AG04450 (cell line): ENCODE measurements at regions of chr7 and their contacts with region 1.

Region 1: GRCh38 chr7:142478479-142479072 is 220.7 kb upstream of the PRSS58 start:
- DNase-seq: no peak
- H3K4me3 ChIP-seq: no peak overlapping the region
- H3K27ac ChIP-seq: no peak overlapping the region
- H3K27me3 ChIP-seq: no peaks in the 10 kb centered on the region
- CTCF ChIP-seq: peak; percentile 61

Region 2: DNA sequence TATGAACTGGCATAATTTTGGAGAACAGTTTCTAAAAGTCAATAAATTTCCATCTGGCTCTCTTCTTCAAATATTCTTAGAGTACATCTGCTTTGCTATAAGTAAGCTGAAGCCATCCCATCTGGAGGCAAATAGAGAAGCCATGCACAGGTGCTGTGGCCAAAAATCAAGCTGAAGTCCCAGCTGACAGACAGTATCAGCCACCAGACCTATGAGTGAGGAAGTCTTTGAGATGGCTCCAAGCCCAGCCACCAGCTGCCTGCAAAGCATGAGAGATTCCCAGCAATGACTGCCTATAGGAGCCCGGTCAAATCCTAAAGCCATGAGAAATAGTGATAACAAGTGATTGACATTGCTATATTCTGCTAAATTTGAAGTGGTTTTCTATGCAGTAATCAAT is 199.0 kb before region 1 on chr7:
- CTCF ChIA-PET with region 1: no interaction called
- POLR2A ChIA-PET with region 1: no interaction called
- DNase-seq: no peak
- H3K4me3 ChIP-seq: no peak overlapping the region
- H3K27ac ChIP-seq: no peak overlapping the region
- H3K27me3 ChIP-seq: no peaks in the 10 kb centered on the region
- CTCF ChIP-seq: no peak

Region 3: GRCh38 chr7:142357953-142358520 is 120.5 kb before region 1 on chr7:
- CTCF ChIA-PET with region 1: interaction called, 19 read pairs
- POLR2A ChIA-PET with region 1: no interaction called
- DNase-seq: peak; percentile 54
- H3K4me3 ChIP-seq: no peak overlapping the region
- H3K27ac ChIP-seq: no peak overlapping the region
- H3K27me3 ChIP-seq: no peaks in the 10 kb centered on the region
- CTCF ChIP-seq: peak; percentile 83

Region 4: GRCh38 chr7:142412551-142413193 is 65.9 kb before region 1 on chr7:
- CTCF ChIA-PET with region 1: interaction called, 25 read pairs
- POLR2A ChIA-PET with region 1: no interaction called
- DNase-seq: no peak
- H3K4me3 ChIP-seq: no peak overlapping the region
- H3K27ac ChIP-seq: no peak overlapping the region
- H3K27me3 ChIP-seq: no peaks in the 10 kb centered on the region
- CTCF ChIP-seq: peak; percentile 73

Region 5: DNA sequence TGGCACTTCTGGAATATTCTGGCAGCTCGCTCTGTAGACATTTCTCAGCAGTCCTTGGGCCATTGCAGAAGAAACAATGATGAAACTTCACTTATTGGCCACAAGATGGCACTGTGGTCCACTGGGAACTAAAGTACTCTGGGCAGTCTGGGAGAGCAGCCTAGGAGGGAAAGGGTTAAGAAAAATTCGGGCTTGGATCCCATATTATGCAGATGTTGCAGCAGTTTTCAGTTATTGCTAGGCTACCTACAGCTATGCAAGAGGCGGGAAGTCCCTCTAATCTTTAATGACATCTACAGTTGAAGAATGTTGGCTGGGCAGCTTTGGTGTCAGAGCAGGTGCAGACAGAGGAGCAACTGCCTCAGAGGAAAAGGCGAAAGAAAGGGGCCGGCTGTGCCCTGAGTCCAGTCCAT is 19.0 kb before region 1 on chr7:
- CTCF ChIA-PET with region 1: interaction called, 328 read pairs
- POLR2A ChIA-PET with region 1: no interaction called
- DNase-seq: peak; percentile 59
- H3K4me3 ChIP-seq: no peak overlapping the region
- H3K27ac ChIP-seq: no peak overlapping the region
- H3K27me3 ChIP-seq: no peaks in the 10 kb centered on the region
- CTCF ChIP-seq: peak; percentile 74

Region 6: GRCh38 chr7:142516038-142516501 is 37.5 kb after region 1 on chr7:
- CTCF ChIA-PET with region 1: interaction called, 35 read pairs
- POLR2A ChIA-PET with region 1: no interaction called
- DNase-seq: peak; percentile 29
- H3K4me3 ChIP-seq: no peak overlapping the region
- H3K27ac ChIP-seq: no peak overlapping the region
- H3K27me3 ChIP-seq: peaks cover 11% of the 10 kb centered on the region
- CTCF ChIP-seq: peak; percentile 80